Activated CD8-positive, alpha-beta memory T cell treated with anti-CD3 and anti-CD28 coated beads, Interleukin-2, amount 10 ng/mL, durations not matched to agents 7 days and 5 days (primary cell): ENCODE measurements at regions of chr9 and their contacts with region 1.

Region 1: DNA sequence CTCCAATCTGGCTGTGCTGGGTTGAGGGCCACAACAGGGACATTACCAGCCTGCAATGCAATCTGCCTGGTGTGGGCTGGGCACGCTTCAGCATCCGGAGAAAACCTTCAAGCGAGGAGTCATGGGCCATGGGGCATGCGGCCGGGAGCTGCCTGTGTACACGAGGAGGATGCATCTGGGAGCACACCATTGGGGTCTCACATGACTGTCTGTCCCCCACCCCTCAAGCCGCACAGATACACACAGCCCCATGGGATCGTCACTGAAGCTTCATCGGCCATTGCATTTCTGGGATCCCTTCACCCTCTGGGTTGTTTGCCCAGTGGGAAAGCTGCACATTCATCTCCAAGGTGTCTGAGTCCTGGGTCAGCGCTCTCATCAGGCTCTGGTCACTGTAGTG is 9.9 kb downstream of the LCN1 start:
- DNase-seq: peak; percentile 23
- ATAC-seq: no peak
- H3K4me3 Mint-ChIP-seq: no peak overlapping the region
- H3K27ac Mint-ChIP-seq: peak overlapping the region; percentile 13
- H3K4me1 Mint-ChIP-seq: peaks cover 38% of the 10 kb centered on the region
- H3K27me3 Mint-ChIP-seq: peaks cover 13% of the 10 kb centered on the region

Region 2: GRCh38 chr9:135504262-135505229 is 26.6 kb before region 1 on chr9:
- CTCF ChIA-PET with region 1: interaction called, 15 read pairs
- DNase-seq: peak; percentile 71
- ATAC-seq: no peak
- H3K4me3 Mint-ChIP-seq: no peak overlapping the region
- H3K27ac Mint-ChIP-seq: no peak overlapping the region
- H3K4me1 Mint-ChIP-seq: peaks cover 13% of the 10 kb centered on the region
- H3K27me3 Mint-ChIP-seq: peaks cover 7% of the 10 kb centered on the region

Region 3: GRCh38 chr9:135544981-135545635 is 14.0 kb after region 1 on chr9:
- CTCF ChIA-PET with region 1: no interaction called
- DNase-seq: no peak
- ATAC-seq: no peak
- H3K4me3 Mint-ChIP-seq: no peak overlapping the region
- H3K27ac Mint-ChIP-seq: no peak overlapping the region
- H3K4me1 Mint-ChIP-seq: peaks cover 4% of the 10 kb centered on the region
- H3K27me3 Mint-ChIP-seq: peaks cover 18% of the 10 kb centered on the region